ENCODE measurements at regions of chr3 and their contacts with region 1.

Region 1: DNA sequence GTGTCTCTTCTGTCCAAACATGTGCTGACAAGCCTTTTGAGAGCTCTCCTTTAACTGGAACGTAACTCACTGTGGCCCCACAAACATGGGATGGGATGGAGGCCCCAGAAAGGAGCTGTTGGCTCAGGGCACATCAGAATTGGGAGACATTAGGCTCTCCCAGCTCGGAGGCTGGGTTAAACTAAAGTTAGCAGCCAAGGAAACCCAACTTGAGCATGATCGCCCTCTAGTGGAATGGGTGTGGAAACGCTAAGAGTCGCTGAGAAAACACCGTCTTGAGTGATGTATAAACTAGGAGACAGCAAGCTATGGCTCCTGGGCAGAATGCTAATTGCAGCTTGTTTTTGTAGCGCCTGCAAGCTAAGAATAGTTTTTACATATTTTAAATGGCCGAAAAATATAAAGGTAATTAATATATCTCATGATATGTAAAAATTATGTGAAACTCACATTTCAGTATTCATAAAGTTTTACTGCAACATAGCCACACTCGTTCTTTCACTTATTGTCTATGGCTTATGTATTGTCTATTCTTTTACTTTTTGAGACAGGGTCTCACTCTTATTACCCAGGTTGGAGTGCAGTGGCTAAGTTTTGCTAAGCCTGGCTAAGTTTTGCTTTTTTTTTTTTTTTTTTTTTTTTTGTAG is 138.8 kb upstream of the HACD2 start:
- DNase-seq: peak; percentile 63
- H3K4me3 ChIP-seq: no peak overlapping the region
- H3K27ac ChIP-seq: peak overlapping the region; percentile 39
- H3K27me3 ChIP-seq: no peaks in the 10 kb centered on the region
- CTCF ChIP-seq: peak; percentile 92

Region 2: DNA sequence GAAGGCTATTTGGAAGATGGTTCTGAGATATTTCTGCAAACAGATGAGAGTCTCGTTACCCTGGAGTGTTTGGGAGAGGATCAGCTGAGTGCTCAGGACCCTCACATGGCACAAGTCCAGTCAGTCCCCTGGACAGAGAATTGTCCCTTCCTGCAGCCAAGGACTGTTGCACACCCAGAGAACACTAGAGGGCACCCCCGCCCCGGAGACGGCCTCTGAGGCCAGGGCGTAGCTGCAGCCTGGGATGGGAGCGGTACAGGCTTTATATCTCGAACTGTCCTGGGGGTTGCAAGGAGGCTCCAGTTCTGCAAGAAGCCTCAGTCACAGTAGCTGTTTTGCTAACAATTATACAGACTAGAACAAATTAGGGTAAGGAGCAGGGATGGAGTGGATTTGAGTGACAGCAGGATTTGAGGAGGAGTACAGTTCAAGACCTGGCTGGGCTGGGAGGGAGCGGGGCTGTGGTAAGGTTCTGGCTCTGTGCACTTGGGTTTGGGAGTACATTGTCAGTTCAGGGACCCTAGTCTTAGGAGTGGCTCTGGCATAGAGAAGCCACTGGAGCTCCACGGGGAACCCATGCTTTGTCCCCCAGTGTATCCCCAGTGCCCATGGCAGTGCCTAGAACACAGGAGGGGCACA is 71.2 kb before region 1 on chr3:
- CTCF ChIA-PET with region 1: interaction called, 60 read pairs
- POLR2A ChIA-PET with region 1: no interaction called
- DNase-seq: no peak
- H3K4me3 ChIP-seq: no peak overlapping the region
- H3K27ac ChIP-seq: peak overlapping the region; percentile 94
- H3K27me3 ChIP-seq: no peaks in the 10 kb centered on the region
- CTCF ChIP-seq: peak; percentile 88

Region 3: GRCh38 chr3:123700791-123701722 is 22.6 kb before region 1 on chr3:
- CTCF ChIA-PET with region 1: interaction called, 19 read pairs
- POLR2A ChIA-PET with region 1: interaction called, 4 read pairs
- DNase-seq: no peak
- H3K4me3 ChIP-seq: peak overlapping the region; percentile 49
- H3K27ac ChIP-seq: no peak overlapping the region
- H3K27me3 ChIP-seq: no peaks in the 10 kb centered on the region
- CTCF ChIP-seq: no peak

Region 4: DNA sequence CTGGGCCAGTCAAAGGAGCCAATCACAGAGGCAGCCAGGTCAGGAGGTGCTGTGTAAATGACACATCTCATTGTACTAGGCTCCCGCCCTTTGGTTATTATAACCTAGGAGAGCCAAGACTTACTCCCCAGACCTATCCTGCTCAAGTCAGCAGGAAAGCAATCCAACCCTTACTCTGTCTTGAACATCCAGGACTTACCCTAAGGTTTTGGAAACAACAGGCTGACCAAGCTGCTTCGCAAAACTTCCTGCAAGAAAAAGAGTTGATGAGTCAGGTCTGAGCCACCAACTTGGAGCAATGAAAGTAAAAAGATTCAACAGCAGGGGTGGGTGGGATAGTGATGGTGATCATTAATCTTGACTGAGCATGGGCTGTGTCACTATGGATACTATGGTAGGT is 16.1 kb after region 1 on chr3:
- CTCF ChIA-PET with region 1: interaction called, 33 read pairs
- POLR2A ChIA-PET with region 1: no interaction called
- DNase-seq: no peak
- H3K4me3 ChIP-seq: no peak overlapping the region
- H3K27ac ChIP-seq: peak overlapping the region; percentile 75
- H3K27me3 ChIP-seq: no peaks in the 10 kb centered on the region
- CTCF ChIP-seq: no peak

Region 5: GRCh38 chr3:123750659-123751420 is 27.2 kb after region 1 on chr3:
- CTCF ChIA-PET with region 1: interaction called, 13 read pairs
- POLR2A ChIA-PET with region 1: interaction called, 6 read pairs
- DNase-seq: peak; percentile 88
- H3K4me3 ChIP-seq: no peak overlapping the region
- H3K27ac ChIP-seq: peak overlapping the region; percentile 97
- H3K27me3 ChIP-seq: no peaks in the 10 kb centered on the region
- CTCF ChIP-seq: peak; percentile 24; the same call in 1 of the 2 replicates

Region 6: GRCh38 chr3:123834631-123835030 is 111.0 kb after region 1 on chr3:
- CTCF ChIA-PET with region 1: no interaction called
- POLR2A ChIA-PET with region 1: no interaction called
- DNase-seq: peak; percentile 45
- H3K4me3 ChIP-seq: no peak overlapping the region
- H3K27ac ChIP-seq: no peak overlapping the region
- H3K27me3 ChIP-seq: no peaks in the 10 kb centered on the region
- CTCF ChIP-seq: no peak

Region 7: DNA sequence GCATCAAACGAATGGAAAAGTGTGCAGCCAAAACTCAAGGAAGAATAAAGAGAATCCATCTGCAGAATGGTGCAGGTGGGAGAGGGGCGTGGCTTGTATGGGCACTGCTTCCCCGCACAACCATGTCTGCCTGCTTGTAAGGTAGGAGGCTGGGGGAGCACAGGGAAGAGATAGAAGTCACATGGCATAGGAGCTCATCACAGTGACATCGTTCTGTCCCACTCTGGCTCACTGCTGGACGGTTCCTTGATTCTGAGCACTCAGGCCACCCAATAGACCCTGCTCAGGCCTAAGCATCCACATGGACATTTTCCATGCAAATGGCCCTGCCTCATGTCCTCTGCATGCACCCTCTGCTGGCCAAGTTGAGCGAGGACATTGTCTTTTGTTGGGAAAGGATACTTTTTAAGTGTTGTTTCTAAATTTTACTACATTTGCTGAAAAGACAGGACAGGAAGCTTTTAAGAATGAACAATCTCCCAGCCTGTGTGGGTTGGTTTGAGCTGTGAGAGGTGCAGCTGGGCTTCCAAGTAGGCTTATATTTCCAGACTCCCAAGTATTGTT is 157.4 kb after region 1 on chr3:
- CTCF ChIA-PET with region 1: interaction called, 14 read pairs
- POLR2A ChIA-PET with region 1: no interaction called
- DNase-seq: peak; percentile 13
- H3K4me3 ChIP-seq: peak overlapping the region; percentile 87
- H3K27ac ChIP-seq: no peak overlapping the region
- H3K27me3 ChIP-seq: no peaks in the 10 kb centered on the region
- CTCF ChIP-seq: peak; percentile 73

Measured in AG04450 (cell line).